ENCODE measurements at regions of chr12 and their contacts with region 1.

Region 1: DNA sequence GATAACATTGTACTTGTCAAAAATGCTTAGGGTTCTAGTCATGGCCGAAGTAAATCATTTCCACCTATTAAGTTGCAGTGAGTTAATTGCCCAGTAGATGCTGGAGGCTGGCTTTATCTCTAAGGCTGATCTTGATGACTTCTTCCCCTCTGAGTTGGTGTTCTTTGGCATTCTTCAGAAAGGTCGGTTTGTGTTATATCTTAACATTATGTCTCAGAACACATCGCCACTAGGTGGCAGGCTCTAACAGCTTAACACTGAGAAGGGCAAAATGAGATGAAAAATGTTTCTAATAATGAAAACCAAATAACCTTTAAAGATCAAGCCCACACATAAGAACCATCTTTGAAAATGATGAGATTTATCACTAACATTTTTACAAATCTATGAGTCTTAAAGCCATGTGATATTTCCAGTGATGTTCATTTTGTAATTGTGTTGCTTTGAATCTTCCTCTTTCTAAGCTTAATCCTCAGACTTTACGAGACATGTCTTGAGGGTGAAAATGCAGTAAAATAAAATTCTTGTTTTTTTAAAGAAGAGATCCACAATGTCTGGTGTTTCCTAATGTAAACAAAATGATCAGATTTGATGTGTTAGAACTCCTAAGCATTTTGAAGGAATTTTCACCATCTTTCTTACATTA is 28.6 kb downstream of the SUDS3 start:
- DNase-seq: peak; percentile 43
- CTCF ChIP-seq: peak; percentile 83

Region 2: DNA sequence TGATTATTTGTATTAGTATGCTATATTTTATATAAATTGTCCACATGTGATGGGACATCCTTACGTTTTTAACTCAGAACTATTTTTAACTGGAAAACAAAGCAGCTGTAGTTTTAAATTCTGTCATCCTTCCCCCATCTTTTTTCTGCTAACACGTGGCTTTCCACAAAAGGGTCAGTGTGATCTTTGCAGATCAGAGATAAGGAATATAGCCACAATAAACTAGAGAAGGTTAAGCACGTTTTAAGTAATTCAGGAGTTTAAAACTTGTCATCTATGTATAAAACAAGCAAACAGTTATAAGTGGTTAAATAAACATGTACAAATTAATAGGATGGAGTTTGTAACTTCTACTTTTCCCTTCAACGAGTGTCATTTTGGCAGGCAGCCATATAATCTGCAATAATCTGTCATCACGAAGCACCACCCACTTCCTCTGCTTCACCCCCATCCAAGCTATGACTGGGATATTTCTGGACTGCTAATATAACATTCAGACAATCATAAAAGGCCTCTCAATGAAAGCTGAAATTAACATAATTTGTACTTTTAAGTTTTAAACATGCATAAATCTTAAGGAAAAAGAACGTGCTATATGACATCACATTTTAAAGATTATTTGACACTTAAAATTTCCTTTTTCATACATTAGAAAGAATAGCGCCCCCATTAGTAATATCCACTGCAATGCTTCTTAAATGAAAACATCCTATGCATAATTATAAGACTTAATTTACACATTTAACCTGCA is 47.6 kb before region 1 on chr12:
- CTCF ChIA-PET with region 1: no interaction called
- POLR2A ChIA-PET with region 1: no interaction called
- DNase-seq: peak; percentile 47
- CTCF ChIP-seq: peak; percentile 32

Region 3: DNA sequence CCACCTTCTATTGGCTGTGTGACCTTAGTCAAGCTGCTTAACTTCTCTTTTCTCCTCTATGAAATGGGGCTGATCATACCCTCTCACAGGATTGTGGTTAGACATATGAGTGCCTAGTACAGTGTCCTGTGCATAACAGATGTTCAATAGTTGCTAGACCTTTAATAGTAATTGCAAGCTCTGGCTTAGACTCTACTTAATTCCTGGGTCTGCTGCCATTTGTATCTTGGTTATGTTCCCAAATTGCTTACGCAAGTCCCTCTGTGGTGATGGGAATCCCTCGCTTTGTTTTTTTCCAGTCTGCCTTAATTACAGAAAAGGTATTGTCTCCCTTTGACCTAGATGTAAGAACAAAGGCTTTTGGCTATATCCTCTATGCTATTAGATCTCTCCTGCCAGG is 13.6 kb before region 1 on chr12:
- CTCF ChIA-PET with region 1: interaction called, 36 read pairs
- POLR2A ChIA-PET with region 1: interaction called, 8 read pairs
- DNase-seq: no peak
- CTCF ChIP-seq: no peak

Region 4: DNA sequence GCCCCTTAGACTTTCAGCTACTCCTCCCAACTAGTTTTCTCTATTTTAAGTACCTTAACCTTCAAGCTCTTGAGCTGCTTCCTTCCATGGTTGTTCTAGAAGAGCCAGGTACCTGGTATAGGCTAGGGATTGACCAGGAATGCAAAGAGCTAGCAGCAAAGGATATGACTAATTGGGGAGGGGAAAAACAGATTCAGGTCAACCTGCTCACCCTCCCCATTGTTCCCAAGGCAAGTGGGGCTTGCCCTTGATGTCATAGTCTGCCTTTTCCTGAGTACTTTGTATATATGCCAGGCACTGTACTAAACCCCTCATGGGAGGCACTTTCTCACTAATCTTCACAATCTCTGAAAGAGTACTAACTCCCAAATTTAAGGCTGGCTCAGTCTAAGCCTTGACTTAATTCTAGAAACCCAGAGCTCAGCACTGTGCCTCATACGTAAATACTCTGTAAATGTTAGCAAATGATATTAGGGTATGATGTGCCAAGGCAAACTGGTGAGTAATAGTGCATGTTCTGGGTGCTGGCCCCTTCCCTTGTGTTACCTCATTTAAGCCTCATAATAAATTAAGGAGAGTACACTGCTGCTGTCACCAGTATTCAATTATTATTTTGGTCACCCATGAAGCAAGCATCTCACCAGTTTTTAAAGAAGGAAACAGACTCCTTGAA is 13.5 kb after region 1 on chr12:
- CTCF ChIA-PET with region 1: interaction called, 10 read pairs
- POLR2A ChIA-PET with region 1: no interaction called
- DNase-seq: no peak
- CTCF ChIP-seq: no peak

Region 5: DNA sequence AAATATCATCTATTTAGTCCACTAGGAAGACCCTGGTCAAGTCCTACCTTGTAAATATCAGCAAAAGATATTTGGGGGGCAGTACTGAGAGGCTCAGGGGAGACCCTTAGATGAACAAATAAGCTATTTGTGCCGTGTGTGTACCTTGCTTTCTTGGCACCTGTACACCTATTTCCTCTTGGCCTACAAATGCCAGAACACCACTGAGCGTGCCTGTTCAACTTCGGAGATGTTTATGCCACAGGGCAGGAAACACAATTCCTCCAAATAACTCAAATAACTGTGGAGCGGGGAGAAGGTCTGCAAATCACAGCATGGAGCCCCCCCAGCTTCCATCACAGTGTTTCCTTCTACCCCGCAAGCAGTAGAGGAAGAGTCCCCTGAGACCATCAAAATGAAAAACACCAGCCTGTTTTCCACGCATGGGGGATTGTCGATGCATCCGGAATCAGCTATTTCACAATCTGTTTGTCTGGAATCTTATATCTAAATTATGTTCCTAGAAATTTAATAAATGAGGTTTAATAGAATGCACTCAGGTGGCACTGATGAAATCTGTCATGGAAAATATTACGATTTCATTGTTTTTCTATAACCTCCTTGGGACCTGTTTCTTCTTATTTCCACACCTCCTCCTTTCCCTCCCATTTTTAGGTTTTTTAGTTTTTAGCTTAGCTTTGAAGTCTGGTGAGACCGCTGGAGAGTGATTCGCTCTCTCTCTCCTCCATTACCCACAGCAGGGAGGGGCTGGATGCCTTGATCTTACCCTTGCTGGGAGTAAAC is 322.4 kb after region 1 on chr12:
- CTCF ChIA-PET with region 1: no interaction called
- POLR2A ChIA-PET with region 1: no interaction called
- DNase-seq: no peak
- CTCF ChIP-seq: no peak